A549 (cell line): ENCODE measurements at regions of chr10 and their contacts with region 1.

Region 1: GRCh38 chr10:12348870-12349628 is at the start of gene CAMK1D:
- DNase-seq: peak; percentile 60 to 74
- ATAC-seq: peak; percentile 64 to 74
- H3K4me3 ChIP-seq: peak within 1 kb of the TSS; percentile 89
- H3K27ac ChIP-seq: peak within 1 kb of the TSS; percentile 98 to 99
- H3K4me1 ChIP-seq: peaks cover 22% of the 10 kb centered on the region
- CTCF ChIP-seq: peak; percentile 59
- EP300 ChIP-seq: no peak
- POLR2A ChIP-seq: peak; percentile 28
- RAD21 ChIP-seq: peak in 1 of 2 experiments; percentile 66; a peak in 3 of 5 replicates
- polyA plus RNA-seq, gene CAMK1D: 12.5 and 15.0 TPM in 2 replicates

Region 2: GRCh38 chr10:12314836-12315235 is 34.2 kb before region 1 on chr10:
- CTCF ChIA-PET with region 1: no interaction called
- POLR2A ChIA-PET with region 1: no interaction called
- DNase-seq: no peak
- ATAC-seq: no peak
- H3K4me3 ChIP-seq: no peak overlapping the region
- H3K27ac ChIP-seq: no peak overlapping the region
- H3K4me1 ChIP-seq: no peaks in the 10 kb centered on the region
- CTCF ChIP-seq: no peak
- EP300 ChIP-seq: no peak
- POLR2A ChIP-seq: no peak
- RAD21 ChIP-seq: no peak

Region 3: DNA sequence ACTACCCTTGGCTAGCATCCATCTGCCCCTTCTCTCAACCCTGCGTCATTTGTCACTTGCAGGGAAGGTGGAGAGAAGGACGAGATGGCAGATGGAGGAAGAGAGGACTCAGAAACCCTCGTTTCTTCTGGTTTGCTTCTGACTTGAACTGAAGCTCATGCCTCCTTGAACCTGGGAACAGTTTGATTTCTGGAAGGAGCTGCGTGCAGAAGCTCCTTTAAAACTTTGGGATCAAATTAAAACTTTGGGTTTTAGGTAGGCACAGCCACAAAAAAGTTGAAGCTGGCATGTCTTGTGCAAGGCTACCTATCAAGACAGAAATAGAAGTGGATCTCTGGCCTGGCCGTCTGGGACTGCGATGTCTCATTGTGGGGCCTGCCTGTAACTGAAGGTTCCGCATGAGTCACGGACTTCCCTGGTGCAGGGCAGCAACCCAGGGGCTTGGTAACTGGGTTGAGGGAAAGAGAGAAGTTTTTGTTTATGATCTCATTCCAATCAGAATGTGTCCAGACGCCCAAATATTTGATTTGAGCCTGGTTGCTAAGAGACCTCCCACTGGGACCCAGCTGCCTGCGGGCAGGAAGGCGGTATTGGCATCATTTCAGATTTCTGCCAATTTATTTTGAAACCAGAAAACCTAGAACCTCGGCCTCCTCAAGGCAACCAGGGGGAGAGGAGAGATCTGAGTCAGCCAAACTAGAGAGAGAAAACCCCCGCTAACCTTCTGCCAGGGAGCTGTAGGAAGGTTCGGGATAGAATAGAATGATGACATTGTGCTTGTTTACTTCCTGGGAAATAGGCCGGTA is 15.5 kb before region 1 on chr10:
- CTCF ChIA-PET with region 1: interaction called, 20 read pairs
- POLR2A ChIA-PET with region 1: interaction called, 7 read pairs
- DNase-seq: peak; percentile 98
- ATAC-seq: peak; percentile 98 to 99
- H3K4me3 ChIP-seq: peak overlapping the region; percentile 12; the same call in 1 of the 3 replicates
- H3K27ac ChIP-seq: peak overlapping the region; percentile 91 to 93
- H3K4me1 ChIP-seq: peaks cover 45% of the 10 kb centered on the region
- CTCF ChIP-seq: no peak
- EP300 ChIP-seq: peak; percentile 87 to 89
- POLR2A ChIP-seq: no peak
- RAD21 ChIP-seq: peak; percentile 2 to 57; a peak in 4 of 5 replicates

Region 4: DNA sequence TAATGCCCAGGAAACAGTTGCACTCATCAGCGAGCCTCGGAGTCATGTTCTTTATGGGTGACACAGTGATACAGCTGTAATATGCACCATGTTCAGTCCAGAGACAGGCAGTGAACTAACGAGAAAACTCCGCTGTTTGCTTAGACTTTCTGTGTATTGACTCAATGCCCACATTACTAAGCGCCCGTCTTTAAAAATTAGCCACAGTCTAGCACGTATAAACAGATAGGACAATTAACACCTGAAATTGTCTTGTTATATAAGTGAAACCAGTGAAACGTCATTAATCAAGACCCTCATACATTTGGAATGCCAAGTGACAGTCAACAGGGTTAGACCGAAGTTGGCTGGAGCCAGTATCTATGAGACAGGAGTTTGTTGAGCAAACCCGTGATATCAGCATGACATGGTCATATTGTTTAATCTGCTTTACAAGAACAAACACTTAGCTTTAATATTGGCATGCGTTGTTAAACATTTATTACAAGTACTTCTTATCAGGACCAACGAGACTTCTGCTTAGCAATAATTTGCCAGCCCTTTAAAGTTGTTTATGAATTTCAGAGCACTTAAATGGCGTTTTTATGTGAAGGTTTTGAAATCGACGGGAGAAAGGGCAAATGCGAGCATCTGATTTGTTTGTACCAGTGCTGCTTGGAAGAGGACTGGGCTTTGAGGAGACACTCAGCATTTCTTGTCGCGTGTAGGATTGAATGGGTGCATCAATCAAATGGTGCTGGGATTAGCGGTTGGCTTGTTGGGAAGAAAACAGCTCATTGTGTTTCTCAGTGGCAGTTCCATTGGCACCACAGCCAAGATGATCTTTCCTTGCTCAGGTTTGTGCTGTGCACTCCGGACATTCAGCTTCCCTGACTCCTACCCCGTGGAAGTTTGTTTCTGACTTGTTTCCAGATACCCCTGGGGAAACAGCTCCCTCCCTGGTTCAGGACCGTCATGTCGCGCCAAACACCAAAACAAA is 56.6 kb after region 1 on chr10:
- CTCF ChIA-PET with region 1: interaction called, 19 read pairs
- POLR2A ChIA-PET with region 1: interaction called, 3 read pairs
- DNase-seq: peak; percentile 53 to 86
- ATAC-seq: peak; percentile 86 to 87
- H3K4me3 ChIP-seq: peak overlapping the region; percentile 32
- H3K27ac ChIP-seq: peak overlapping the region; percentile 72 to 80
- H3K4me1 ChIP-seq: peaks cover 28% of the 10 kb centered on the region
- CTCF ChIP-seq: peak; percentile 27; the same call in 2 of the 3 replicates
- EP300 ChIP-seq: peak; percentile 29 to 62; a peak in 2 of 5 replicates
- POLR2A ChIP-seq: no peak
- RAD21 ChIP-seq: peak; percentile 15 to 34; a peak in 2 of 5 replicates

Region 5: GRCh38 chr10:12445701-12446334 is 96.8 kb after region 1 on chr10:
- CTCF ChIA-PET with region 1: no interaction called
- POLR2A ChIA-PET with region 1: no interaction called
- DNase-seq: no peak
- ATAC-seq: no peak
- H3K4me3 ChIP-seq: no peak overlapping the region
- H3K27ac ChIP-seq: no peak overlapping the region
- H3K4me1 ChIP-seq: peaks cover 8% of the 10 kb centered on the region; the same call in 2 of the 3 replicates
- CTCF ChIP-seq: no peak
- EP300 ChIP-seq: no peak
- POLR2A ChIP-seq: no peak
- RAD21 ChIP-seq: no peak